ENCODE measurements at regions of chr19 and their contacts with region 1.

Region 1: GRCh38 chr19:45092747-45093678 is at the start of gene PPP1R37:
- DNase-seq: peak; percentile 77
- ATAC-seq: peak; percentile 86
- H3K4me3 ChIP-seq: peak within 1 kb of the TSS; percentile 93
- H3K27ac ChIP-seq: peak within 1 kb of the TSS; percentile 98
- H3K4me1 ChIP-seq: peaks cover 9% of the 10 kb centered on the region
- H3K27me3 ChIP-seq: no peaks in the 10 kb centered on the region
- CTCF ChIP-seq: peak; percentile 7 to 24 (median 13); a peak in 2 of 6 replicates
- EP300 ChIP-seq: peak in 1 of 2 experiments; percentile 100; a peak in 2 of 4 replicates
- POLR2A ChIP-seq: peak; percentile 80
- RAD21 ChIP-seq: no peak
- polyA plus RNA-seq, gene PPP1R37: 0.09 TPM in 1 of 2 experiments, not detected in the other

Region 2: GRCh38 chr19:45027371-45027770 is 65.6 kb before region 1 on chr19:
- CTCF ChIA-PET with region 1: no interaction called
- POLR2A ChIA-PET with region 1: no interaction called
- RAD21 ChIA-PET with region 1: no interaction called
- SMC1A ChIA-PET with region 1: no interaction called
- in situ Hi-C with region 1: no loop called
- intact Hi-C with region 1: no loop called
- DNase-seq: no peak
- ATAC-seq: peak; percentile 38; the same call in 1 of the 3 replicates
- H3K4me3 ChIP-seq: no peak overlapping the region
- H3K27ac ChIP-seq: no peak overlapping the region
- H3K4me1 ChIP-seq: no peaks in the 10 kb centered on the region
- H3K27me3 ChIP-seq: no peaks in the 10 kb centered on the region
- CTCF ChIP-seq: no peak
- EP300 ChIP-seq: no peak
- POLR2A ChIP-seq: no peak
- RAD21 ChIP-seq: no peak

Region 3: DNA sequence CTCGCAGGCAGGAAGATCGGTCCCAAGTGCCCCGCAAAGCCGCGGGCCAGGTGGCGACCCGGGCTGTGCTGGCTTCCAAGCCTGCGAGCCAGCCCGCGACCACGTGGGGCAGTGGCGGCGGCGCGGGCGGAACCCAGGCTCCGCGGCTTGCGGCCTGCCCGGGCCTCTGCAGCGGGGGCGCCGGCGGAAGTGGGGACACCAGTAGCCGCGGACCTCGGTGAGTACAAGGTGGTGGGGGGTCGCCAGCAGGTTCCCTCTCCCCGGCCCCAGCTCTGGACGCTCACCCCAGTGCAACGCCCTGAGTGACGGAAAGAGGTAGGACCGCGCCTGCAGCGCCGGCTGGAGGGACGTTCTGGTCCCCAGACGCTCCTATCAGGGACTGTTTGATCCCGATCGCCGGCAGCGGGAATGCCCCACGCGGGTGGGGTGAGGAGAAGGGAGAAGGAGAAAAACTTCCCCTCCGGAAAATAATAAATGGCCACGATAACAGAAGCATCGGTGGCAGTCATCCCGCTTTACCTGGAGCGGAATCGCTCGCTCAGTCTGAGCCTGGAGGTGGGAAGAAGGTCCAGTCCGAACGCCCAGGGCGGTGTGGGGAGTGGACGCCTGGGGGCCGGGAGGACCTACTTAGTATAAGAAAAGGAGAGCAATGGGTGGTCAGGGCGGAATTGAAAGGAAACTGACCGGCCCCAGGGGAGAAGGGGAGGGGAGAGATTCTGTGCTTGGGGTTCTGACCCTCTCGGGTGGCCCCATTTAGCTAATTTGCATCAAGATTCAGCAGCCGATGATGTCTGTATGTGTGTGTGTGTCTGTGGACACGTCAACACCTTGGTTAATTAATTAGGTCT is 13.7 kb before region 1 on chr19 and contains the start of gene GEMIN7:
- CTCF ChIA-PET with region 1: interaction called, 12 read pairs
- POLR2A ChIA-PET with region 1: interaction called, 36 read pairs
- RAD21 ChIA-PET with region 1: interaction called, 19 read pairs
- SMC1A ChIA-PET with region 1: interaction called, 7 read pairs
- in situ Hi-C with region 1: no loop called
- intact Hi-C with region 1: loop called (anchors 2 kb)
- DNase-seq: peak; percentile 64
- ATAC-seq: peak; percentile 56
- H3K4me3 ChIP-seq: peak within 1 kb of the TSS; percentile 89
- H3K27ac ChIP-seq: peak within 1 kb of the TSS; percentile 95
- H3K4me1 ChIP-seq: peaks cover 22% of the 10 kb centered on the region
- H3K27me3 ChIP-seq: no peaks in the 10 kb centered on the region
- CTCF ChIP-seq: peak in 2 of 3 experiments; percentile 9 to 11; a peak in 1 of 6 replicates
- EP300 ChIP-seq: peak; percentile 65 to 80; a peak in 2 of 4 replicates
- POLR2A ChIP-seq: peak; percentile 83
- RAD21 ChIP-seq: no peak
- polyA plus RNA-seq, gene GEMIN7: 51.6 to 55.3 TPM

Region 4: GRCh38 chr19:45117669-45118068 is 24.7 kb after region 1 on chr19:
- CTCF ChIA-PET with region 1: interaction called, 13 read pairs
- POLR2A ChIA-PET with region 1: interaction called, 14 read pairs
- RAD21 ChIA-PET with region 1: interaction called, 8 read pairs
- SMC1A ChIA-PET with region 1: interaction called, 7 read pairs
- in situ Hi-C with region 1: no loop called
- intact Hi-C with region 1: no loop called
- DNase-seq: no peak
- ATAC-seq: peak; percentile 11
- H3K4me3 ChIP-seq: no peak overlapping the region
- H3K27ac ChIP-seq: peak overlapping the region; percentile 66; the same call in 1 of the 2 replicates
- H3K4me1 ChIP-seq: peaks cover 84% of the 10 kb centered on the region
- H3K27me3 ChIP-seq: no peaks in the 10 kb centered on the region
- CTCF ChIP-seq: no peak
- EP300 ChIP-seq: no peak
- POLR2A ChIP-seq: no peak
- RAD21 ChIP-seq: no peak

Region 5: DNA sequence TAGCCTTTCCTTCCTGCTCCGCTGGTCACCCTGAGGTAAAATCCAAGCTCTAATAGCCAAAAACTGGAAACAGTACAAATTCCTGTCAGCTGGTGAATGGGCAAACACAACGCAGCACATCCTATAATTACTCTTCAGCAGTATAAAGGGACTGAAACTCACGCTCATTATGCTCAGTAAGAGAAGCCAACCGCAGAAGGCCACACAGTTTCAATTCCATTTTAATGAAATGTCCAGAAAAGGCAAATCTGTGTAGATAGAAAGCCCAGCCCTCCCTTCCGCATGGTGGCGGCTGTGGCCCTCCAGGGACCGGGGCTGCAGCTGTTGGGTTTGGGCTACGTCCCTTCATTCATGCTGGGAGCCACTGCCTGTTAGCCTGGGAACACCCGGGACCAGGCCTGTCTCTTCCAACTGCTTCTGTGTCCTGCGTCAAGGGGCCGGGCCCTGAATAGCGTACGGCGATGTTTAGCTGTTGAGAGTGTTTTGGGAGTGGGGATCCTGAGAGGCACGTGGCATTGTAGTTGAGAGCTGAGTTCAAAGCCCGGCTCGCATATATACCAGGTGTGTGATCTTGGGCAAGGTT is 44.3 kb after region 1 on chr19:
- CTCF ChIA-PET with region 1: interaction called, 8 read pairs
- POLR2A ChIA-PET with region 1: interaction called, 25 read pairs
- RAD21 ChIA-PET with region 1: interaction called, 20 read pairs
- SMC1A ChIA-PET with region 1: interaction called, 15 read pairs
- in situ Hi-C with region 1: no loop called
- intact Hi-C with region 1: no loop called
- DNase-seq: peak; percentile 93
- ATAC-seq: peak; percentile 95
- H3K4me3 ChIP-seq: peak overlapping the region; percentile 39; the same call in 1 of the 2 replicates
- H3K27ac ChIP-seq: peak overlapping the region; percentile 97
- H3K4me1 ChIP-seq: peaks cover 51% of the 10 kb centered on the region
- H3K27me3 ChIP-seq: no peaks in the 10 kb centered on the region
- CTCF ChIP-seq: peak in 2 of 3 experiments; percentile 14 to 29; a peak in 2 of 6 replicates
- EP300 ChIP-seq: peak in 1 of 2 experiments; percentile 81; a peak in 2 of 4 replicates
- POLR2A ChIP-seq: peak; percentile 47; the same call in 1 of the 2 replicates
- RAD21 ChIP-seq: no peak

Region 6: DNA sequence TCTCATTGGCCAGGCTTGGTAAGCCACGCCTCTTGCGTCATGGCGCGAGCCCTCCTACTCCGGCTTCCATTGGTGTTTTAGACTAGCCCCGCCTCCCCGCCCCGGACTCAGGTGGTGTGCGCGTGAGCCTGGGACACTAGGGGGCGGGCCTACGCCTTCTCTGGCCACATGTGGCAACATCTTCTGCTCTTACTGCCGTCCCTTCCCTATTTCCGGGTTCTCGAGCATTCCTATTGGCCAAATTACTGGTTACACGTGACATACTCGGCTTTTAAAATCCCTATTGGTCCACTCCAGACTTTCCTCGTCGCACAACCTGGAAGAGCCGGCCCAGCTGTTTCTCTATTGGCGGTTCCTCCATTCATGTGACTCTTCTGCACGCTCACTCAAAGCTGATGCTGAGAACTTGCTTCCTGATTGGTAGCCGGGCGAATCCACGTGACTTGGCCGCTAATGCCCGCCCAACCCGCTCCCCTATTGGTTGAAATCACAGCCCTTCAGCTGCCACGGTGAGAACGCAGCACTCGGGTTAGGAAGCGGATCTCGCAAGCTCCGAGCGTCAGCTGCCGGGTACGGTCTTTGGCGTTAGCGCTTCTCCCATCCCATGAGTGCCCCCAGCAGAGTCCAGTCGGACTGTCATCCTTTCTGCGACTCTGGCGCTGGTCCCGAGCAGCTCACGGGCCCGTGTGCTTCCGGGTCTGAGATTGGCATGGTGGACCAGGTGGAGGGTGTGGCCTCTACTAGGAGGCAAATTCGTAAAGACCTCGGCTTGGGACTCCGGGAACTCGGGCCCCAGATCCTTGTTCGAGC is 85.5 kb after region 1 on chr19 and contains the start of gene BLOC1S3:
- CTCF ChIA-PET with region 1: interaction called, 14 read pairs
- POLR2A ChIA-PET with region 1: interaction called, 14 read pairs
- RAD21 ChIA-PET with region 1: interaction called, 8 read pairs
- SMC1A ChIA-PET with region 1: interaction called, 4 read pairs
- in situ Hi-C with region 1: no loop called
- intact Hi-C with region 1: loop called (anchors 5 kb)
- DNase-seq: peak; percentile 100
- ATAC-seq: peak; percentile 89
- H3K4me3 ChIP-seq: peak within 1 kb of the TSS; percentile 96
- H3K27ac ChIP-seq: peak within 1 kb of the TSS; percentile 79
- H3K4me1 ChIP-seq: peaks cover 25% of the 10 kb centered on the region
- H3K27me3 ChIP-seq: no peaks in the 10 kb centered on the region
- CTCF ChIP-seq: peak; percentile 19 to 48 (median 37); a peak in 4 of 6 replicates
- EP300 ChIP-seq: no peak
- POLR2A ChIP-seq: peak; percentile 83
- RAD21 ChIP-seq: no peak
- polyA plus RNA-seq, gene BLOC1S3: 10.0 to 14.5 TPM

Region 7: GRCh38 chr19:45306518-45307027 is 213.6 kb after region 1 on chr19:
- CTCF ChIA-PET with region 1: no interaction called
- POLR2A ChIA-PET with region 1: no interaction called
- RAD21 ChIA-PET with region 1: no interaction called
- SMC1A ChIA-PET with region 1: no interaction called
- in situ Hi-C with region 1: no loop called
- intact Hi-C with region 1: no loop called
- DNase-seq: no peak
- ATAC-seq: no peak
- H3K4me3 ChIP-seq: no peak overlapping the region
- H3K27ac ChIP-seq: no peak overlapping the region
- H3K4me1 ChIP-seq: no peaks in the 10 kb centered on the region
- H3K27me3 ChIP-seq: no peaks in the 10 kb centered on the region
- CTCF ChIP-seq: no peak
- EP300 ChIP-seq: no peak
- POLR2A ChIP-seq: no peak
- RAD21 ChIP-seq: no peak

Region 8: GRCh38 chr19:45485305-45486077 is 392.5 kb after region 1 on chr19:
- CTCF ChIA-PET with region 1: no interaction called
- POLR2A ChIA-PET with region 1: no interaction called
- RAD21 ChIA-PET with region 1: no interaction called
- SMC1A ChIA-PET with region 1: no interaction called
- in situ Hi-C with region 1: no loop called
- intact Hi-C with region 1: loop called (anchors 10 kb)
- DNase-seq: peak; percentile 71
- ATAC-seq: peak; percentile 99
- H3K4me3 ChIP-seq: peak overlapping the region; percentile 74
- H3K27ac ChIP-seq: 0 out of 2 replicates have a peak overlapping the region, but pooled peaks have one; percentile 40
- H3K4me1 ChIP-seq: 0 out of 2 replicates have a peak, but pooled peaks cover 3% of the 10 kb centered on the region
- H3K27me3 ChIP-seq: no peaks in the 10 kb centered on the region
- CTCF ChIP-seq: peak; percentile 91 to 98 (median 96)
- EP300 ChIP-seq: no peak
- POLR2A ChIP-seq: no peak
- RAD21 ChIP-seq: peak; percentile 60